ENCODE measurements at regions of chr14 and their contacts with region 1.

Region 1: GRCh38 chr14:52455291-52456088 is 96.8 kb downstream of the TXNDC16 start:
- DNase-seq: no peak
- H3K4me3 ChIP-seq: no peak overlapping the region
- H3K27ac ChIP-seq: no peak overlapping the region
- H3K4me1 ChIP-seq: no peaks in the 10 kb centered on the region
- H3K27me3 ChIP-seq: no peaks in the 10 kb centered on the region
- CTCF ChIP-seq: no peak

Region 2: GRCh38 chr14:52835122-52835903 is 379.8 kb after region 1 on chr14:
- CTCF ChIA-PET with region 1: no interaction called
- POLR2A ChIA-PET with region 1: no interaction called
- intact Hi-C with region 1: no loop called
- DNase-seq: peak; percentile 95
- H3K4me3 ChIP-seq: peak overlapping the region; percentile 0
- H3K27ac ChIP-seq: peak overlapping the region; percentile 62
- H3K4me1 ChIP-seq: peaks cover 49% of the 10 kb centered on the region
- H3K27me3 ChIP-seq: no peaks in the 10 kb centered on the region
- CTCF ChIP-seq: no peak

Region 3: DNA sequence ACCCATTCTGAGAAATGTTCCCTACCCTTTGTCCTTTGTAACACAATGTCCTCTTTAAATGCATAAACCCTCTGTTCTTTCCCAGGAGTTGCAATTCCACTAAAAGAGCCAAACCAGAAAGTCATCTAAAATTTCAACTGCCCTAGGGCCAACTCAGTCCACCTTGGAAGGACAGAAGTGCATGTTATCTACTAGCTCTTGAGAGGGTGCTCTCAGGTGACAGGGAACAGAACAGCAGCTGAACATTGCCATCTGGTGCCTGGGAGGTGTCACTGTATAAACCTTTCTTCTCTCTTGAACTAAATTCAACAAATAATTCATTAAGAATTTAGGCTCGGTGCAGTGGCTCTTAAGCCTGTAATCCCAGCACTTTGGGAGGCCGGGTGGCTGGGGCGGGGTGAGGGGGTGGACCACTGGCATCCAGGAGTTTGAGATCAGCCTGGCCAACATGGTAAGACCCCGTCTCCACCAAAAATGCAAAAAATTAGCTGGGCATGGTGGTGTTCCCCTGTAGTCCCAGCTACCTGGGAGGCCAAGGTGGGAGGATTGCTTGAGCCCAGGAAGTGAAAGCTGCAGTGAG is 505.7 kb after region 1 on chr14:
- CTCF ChIA-PET with region 1: no interaction called
- POLR2A ChIA-PET with region 1: no interaction called
- intact Hi-C with region 1: loop called (anchors 10 kb)
- DNase-seq: peak; percentile 79
- H3K4me3 ChIP-seq: no peak overlapping the region
- H3K27ac ChIP-seq: no peak overlapping the region
- H3K4me1 ChIP-seq: no peaks in the 10 kb centered on the region
- H3K27me3 ChIP-seq: no peaks in the 10 kb centered on the region
- CTCF ChIP-seq: peak; percentile 79

Measured in A673 (cell line).